ENCODE measurements at regions of chr20 and their contacts with region 1.

Region 1: GRCh38 chr20:8389381-8390036 is 257.4 kb downstream of the PLCB1 start:
- DNase-seq: no peak
- ATAC-seq: peak; percentile 47; the same call in 2 of the 3 replicates
- H3K4me3 ChIP-seq: no peak overlapping the region
- H3K27ac ChIP-seq: no peak overlapping the region
- H3K4me1 ChIP-seq: no peaks in the 10 kb centered on the region
- H3K27me3 ChIP-seq: no peaks in the 10 kb centered on the region
- CTCF ChIP-seq: peak; percentile 11 to 48 (median 46); a peak in 5 of 6 replicates
- EP300 ChIP-seq: no peak
- POLR2A ChIP-seq: no peak
- RAD21 ChIP-seq: peak; percentile 42; the same call in 1 of the 2 replicates

Region 2: GRCh38 chr20:7935027-7935551 is 454.4 kb before region 1 on chr20:
- CTCF ChIA-PET with region 1: interaction called, 14 read pairs
- POLR2A ChIA-PET with region 1: no interaction called
- RAD21 ChIA-PET with region 1: interaction called, 5 read pairs
- SMC1A ChIA-PET with region 1: interaction called, 6 read pairs
- in situ Hi-C with region 1: no loop called
- intact Hi-C with region 1: loop called (anchors 10 kb)
- DNase-seq: peak; percentile 3
- ATAC-seq: peak; percentile 85
- H3K4me3 ChIP-seq: no peak overlapping the region
- H3K27ac ChIP-seq: no peak overlapping the region
- H3K4me1 ChIP-seq: no peaks in the 10 kb centered on the region; the same call in 1 of the 2 replicates
- H3K27me3 ChIP-seq: no peaks in the 10 kb centered on the region
- CTCF ChIP-seq: no peak
- EP300 ChIP-seq: 0 out of 4 replicates have a peak, but pooled peaks have one; percentile 13 to 37
- POLR2A ChIP-seq: no peak
- RAD21 ChIP-seq: no peak

Region 3: GRCh38 chr20:8131598-8132483 is 257.7 kb before region 1 on chr20 and contains the start of gene PLCB1:
- CTCF ChIA-PET with region 1: interaction called, 13 read pairs
- POLR2A ChIA-PET with region 1: no interaction called
- RAD21 ChIA-PET with region 1: interaction called, 5 read pairs
- SMC1A ChIA-PET with region 1: interaction called, 5 read pairs
- in situ Hi-C with region 1: loop called (anchors 10 kb)
- intact Hi-C with region 1: loop called (anchors 1 kb)
- DNase-seq: no peak
- ATAC-seq: peak; percentile 95
- H3K4me3 ChIP-seq: peak within 1 kb of the TSS; percentile 41; the same call in 1 of the 2 replicates
- H3K27ac ChIP-seq: no peak within 1 kb of the TSS
- H3K4me1 ChIP-seq: peaks cover 10% of the 10 kb centered on the region; the same call in 1 of the 2 replicates
- H3K27me3 ChIP-seq: peaks cover 5 to 10% of the 10 kb centered on the region in 2 experiments
- CTCF ChIP-seq: peak; percentile 79 to 95 (median 93); a peak in 5 of 6 replicates
- EP300 ChIP-seq: no peak
- POLR2A ChIP-seq: no peak
- RAD21 ChIP-seq: peak; percentile 89
- polyA plus RNA-seq, gene PLCB1: 0.05 TPM in 1 of 2 experiments, not detected in the other

Region 4: GRCh38 chr20:8305449-8305978 is 84.0 kb before region 1 on chr20:
- CTCF ChIA-PET with region 1: interaction called, 10 read pairs
- POLR2A ChIA-PET with region 1: no interaction called
- RAD21 ChIA-PET with region 1: no interaction called
- SMC1A ChIA-PET with region 1: no interaction called
- in situ Hi-C with region 1: no loop called
- intact Hi-C with region 1: loop called (anchors 1 kb)
- DNase-seq: peak; percentile 30
- ATAC-seq: peak; percentile 95
- H3K4me3 ChIP-seq: no peak overlapping the region
- H3K27ac ChIP-seq: no peak overlapping the region
- H3K4me1 ChIP-seq: no peaks in the 10 kb centered on the region
- H3K27me3 ChIP-seq: no peaks in the 10 kb centered on the region
- CTCF ChIP-seq: peak; percentile 65 to 80 (median 79)
- EP300 ChIP-seq: no peak
- POLR2A ChIP-seq: no peak
- RAD21 ChIP-seq: peak; percentile 60

Region 5: GRCh38 chr20:8399947-8400346 is 10.4 kb after region 1 on chr20:
- CTCF ChIA-PET with region 1: interaction called, 30 read pairs
- POLR2A ChIA-PET with region 1: interaction called, 3 read pairs
- RAD21 ChIA-PET with region 1: interaction called, 6 read pairs
- SMC1A ChIA-PET with region 1: interaction called, 43 read pairs
- in situ Hi-C with region 1: no loop called
- intact Hi-C with region 1: no loop called
- DNase-seq: peak; percentile 92
- ATAC-seq: peak; percentile 94
- H3K4me3 ChIP-seq: peak overlapping the region; percentile 15; the same call in 1 of the 2 replicates
- H3K27ac ChIP-seq: peak overlapping the region; percentile 52; the same call in 1 of the 2 replicates
- H3K4me1 ChIP-seq: peaks cover 10% of the 10 kb centered on the region; the same call in 1 of the 2 replicates
- H3K27me3 ChIP-seq: no peaks in the 10 kb centered on the region
- CTCF ChIP-seq: peak in 1 of 3 experiments; percentile 9; a peak in 1 of 6 replicates
- EP300 ChIP-seq: peak; percentile 90 to 97
- POLR2A ChIP-seq: no peak
- RAD21 ChIP-seq: no peak

Region 6: DNA sequence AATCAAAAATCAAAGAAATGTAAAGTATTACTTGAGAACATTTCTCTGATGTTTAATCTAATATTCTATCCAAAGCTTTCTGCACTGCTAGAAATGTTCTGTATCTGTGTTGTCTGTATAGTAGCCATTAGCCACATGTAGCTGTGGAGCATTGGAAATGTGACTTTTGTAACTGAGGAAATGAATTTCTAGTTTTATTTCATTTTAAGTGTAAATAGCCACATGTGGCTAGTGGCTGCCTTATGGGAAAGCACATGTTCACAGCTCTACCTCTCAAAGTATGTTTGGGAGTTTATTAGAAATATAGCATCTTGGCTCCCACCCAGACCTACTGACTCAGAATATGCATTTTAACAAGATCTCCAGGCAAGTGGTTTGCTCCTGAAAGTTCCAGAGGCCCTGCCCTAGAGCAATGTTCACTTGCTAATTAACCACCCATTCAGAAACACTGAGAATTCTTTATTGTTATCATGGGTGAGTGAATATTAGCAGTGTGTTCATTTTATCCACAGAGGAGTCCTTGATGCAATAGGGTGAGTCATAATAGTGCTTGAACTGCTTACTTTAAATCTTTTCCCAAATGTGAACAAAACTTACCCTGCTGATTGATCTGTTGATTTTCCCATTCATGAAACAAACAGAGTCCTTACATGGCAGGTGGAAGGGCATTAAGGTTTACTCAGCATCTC is 25.2 kb after region 1 on chr20:
- CTCF ChIA-PET with region 1: interaction called, 11 read pairs
- POLR2A ChIA-PET with region 1: no interaction called
- RAD21 ChIA-PET with region 1: interaction called, 6 read pairs
- SMC1A ChIA-PET with region 1: interaction called, 24 read pairs
- in situ Hi-C with region 1: no loop called
- intact Hi-C with region 1: no loop called
- DNase-seq: peak; percentile 61
- ATAC-seq: peak; percentile 88
- H3K4me3 ChIP-seq: no peak overlapping the region
- H3K27ac ChIP-seq: no peak overlapping the region
- H3K4me1 ChIP-seq: no peaks in the 10 kb centered on the region
- H3K27me3 ChIP-seq: no peaks in the 10 kb centered on the region
- CTCF ChIP-seq: no peak
- EP300 ChIP-seq: peak; percentile 27 to 43; a peak in 1 of 4 replicates
- POLR2A ChIP-seq: no peak
- RAD21 ChIP-seq: no peak